ENCODE measurements at regions of chr18 and their contacts with region 1.

Region 1: GRCh38 chr18:22846088-22846683 is 86.9 kb upstream of the RBBP8 start:
- DNase-seq: no peak
- ATAC-seq: peak; percentile 83 to 88 (median 86)
- H3K4me3 ChIP-seq: no peak overlapping the region
- H3K27ac ChIP-seq: no peak overlapping the region
- H3K4me1 ChIP-seq: peaks cover 0 to 7% (median 0%) of the 10 kb centered on the region in 4 donors
- H3K27me3 ChIP-seq: no peaks in the 10 kb centered on the region
- CTCF ChIP-seq: peak; percentile 57 to 63 (median 58)
- POLR2A ChIP-seq: no peak

Region 2: GRCh38 chr18:22983175-22983574 is 137.0 kb after region 1 on chr18:
- intact Hi-C with region 1: loop called in 1 of 2 experiments (anchors 10 kb)
- DNase-seq: no peak
- ATAC-seq: peak; percentile 36 to 59 (median 46)
- H3K4me3 ChIP-seq: no peak overlapping the region
- H3K27ac ChIP-seq: no peak overlapping the region
- H3K4me1 ChIP-seq: no peaks in the 10 kb centered on the region
- H3K27me3 ChIP-seq: no peaks in the 10 kb centered on the region
- CTCF ChIP-seq: peak; percentile 50 to 75 (median 63)
- POLR2A ChIP-seq: no peak

Region 3: GRCh38 chr18:23038712-23039111 is 192.5 kb after region 1 on chr18:
- intact Hi-C with region 1: no loop called
- DNase-seq: no peak
- ATAC-seq: no peak
- H3K4me3 ChIP-seq: no peak overlapping the region
- H3K27ac ChIP-seq: no peak overlapping the region
- H3K4me1 ChIP-seq: no peaks in the 10 kb centered on the region
- H3K27me3 ChIP-seq: no peaks in the 10 kb centered on the region
- CTCF ChIP-seq: no peak
- POLR2A ChIP-seq: no peak

Measured in right lobe of liver (tissue), 6 donors.